ENCODE measurements at regions of chr6 and their contacts with region 1.

Region 1: DNA sequence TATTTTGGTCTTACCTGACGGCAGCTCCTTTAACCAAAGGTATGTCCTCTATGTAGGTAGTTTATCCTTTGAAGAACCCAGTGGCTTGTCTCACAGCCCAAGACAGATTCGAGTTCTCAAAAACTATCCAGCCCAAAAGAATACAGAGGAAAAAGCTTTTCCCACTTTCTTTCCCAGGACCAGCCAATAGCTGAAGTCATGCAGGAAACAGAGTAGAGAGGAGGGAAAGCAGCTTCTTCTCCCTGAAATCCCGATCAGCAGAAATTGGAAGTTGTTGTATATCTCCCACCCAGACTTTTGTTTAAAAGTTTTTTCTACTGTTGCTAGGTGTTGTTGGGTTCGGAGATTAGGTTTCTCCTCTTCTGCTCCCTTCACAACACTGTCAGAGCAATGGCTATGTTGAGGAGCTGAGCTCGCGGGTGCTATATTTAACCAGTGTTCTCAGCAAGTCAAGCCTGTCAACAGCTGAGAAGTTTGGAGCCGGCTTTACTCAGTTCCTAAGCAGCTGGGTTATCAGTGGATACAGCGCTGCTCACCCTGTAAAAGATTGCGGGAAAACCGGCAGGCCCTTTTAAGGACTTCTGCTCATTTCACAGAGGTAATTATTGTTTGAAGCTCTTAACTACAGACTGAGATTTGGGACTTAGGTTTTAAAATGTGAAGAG is at the start of gene FILIP1:
- DNase-seq: peak; percentile 66
- ATAC-seq: peak; percentile 94 to 96
- total RNA-seq, gene FILIP1: 85.8 to 86.3 TPM

Region 2: GRCh38 chr6:75368151-75368779 is 125.3 kb before region 1 on chr6:
- intact Hi-C with region 1: loop called in 1 of 2 experiments (anchors 5 kb)
- DNase-seq: peak; percentile 30
- ATAC-seq: peak; percentile 76

Region 3: GRCh38 chr6:75397656-75398465 is 95.7 kb before region 1 on chr6:
- intact Hi-C with region 1: no loop called
- DNase-seq: no peak
- ATAC-seq: no peak

Region 4: GRCh38 chr6:75437421-75437891 is 56.1 kb before region 1 on chr6:
- intact Hi-C with region 1: loop called in 1 of 2 experiments (anchors 5 kb)
- DNase-seq: no peak
- ATAC-seq: peak; percentile 62 to 90

Region 5: DNA sequence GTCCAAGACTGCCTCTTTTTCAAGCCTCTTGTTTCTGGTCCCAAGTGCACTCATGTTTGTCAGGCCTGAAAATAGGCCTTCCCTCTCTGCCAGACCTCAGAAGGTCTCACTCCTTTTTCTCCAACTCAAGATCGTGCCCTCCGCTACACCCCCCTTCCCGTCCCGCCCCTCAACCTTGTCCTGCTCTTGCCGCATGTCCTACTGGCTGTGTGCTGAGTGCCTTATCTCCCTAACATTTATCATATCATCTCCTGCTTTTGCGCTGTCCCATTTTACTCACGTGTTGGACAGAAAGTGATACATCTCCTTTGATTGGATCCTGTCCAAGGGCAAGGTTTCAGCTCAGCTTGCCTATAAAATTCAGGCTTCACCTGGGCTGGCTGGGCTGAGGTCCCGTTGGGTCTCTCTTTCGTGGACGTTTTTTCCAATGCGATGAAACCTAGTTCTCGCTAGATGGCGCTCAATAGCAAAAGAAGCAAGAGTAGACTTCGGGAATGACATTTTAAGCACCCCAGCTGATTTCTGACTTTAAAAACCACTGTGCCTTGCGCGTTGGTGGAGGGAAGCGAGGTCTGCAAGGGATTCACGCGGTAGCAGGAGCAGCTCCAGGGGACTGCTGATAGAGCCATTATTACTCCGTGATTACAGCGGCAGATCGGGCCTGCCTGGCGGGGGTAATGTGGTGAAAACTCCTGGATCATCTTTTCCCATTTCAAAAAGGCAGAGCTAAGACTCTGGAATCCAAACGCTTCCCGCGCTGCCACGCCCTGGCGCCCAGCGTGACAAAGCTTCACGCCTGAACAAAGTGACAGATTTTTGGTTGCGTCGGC is 441.3 kb after region 1 on chr6:
- intact Hi-C with region 1: no loop called
- DNase-seq: no peak
- ATAC-seq: peak; percentile 60 to 67